ENCODE measurements at regions of chr20 and their contacts with region 1.

Region 1: GRCh38 chr20:44733341-44734069 is 12.2 kb upstream of the KCNK15 start:
- DNase-seq: peak; percentile 66 to 69
- ATAC-seq: peak; percentile 21 to 65 (median 50)
- H3K4me3 ChIP-seq: no peak overlapping the region
- H3K27ac ChIP-seq: no peak overlapping the region
- H3K4me1 ChIP-seq: peaks cover 3 to 35% (median 22%) of the 10 kb centered on the region in 9 donors
- H3K27me3 ChIP-seq: no peaks in the 10 kb centered on the region
- CTCF ChIP-seq: peak; percentile 85 to 96 (median 94)

Region 2: GRCh38 chr20:44210422-44211176 is 522.9 kb before region 1 on chr20 and contains the start of gene OSER1:
- intact Hi-C with region 1: loop called in 3 of 10 experiments (anchors 5 to 10 kb)
- DNase-seq: peak; percentile 97
- ATAC-seq: peak; percentile 93 to 97 (median 96)
- H3K4me3 ChIP-seq: peak within 1 kb of the TSS; percentile 73 to 99 (median 93)
- H3K27ac ChIP-seq: peak within 1 kb of the TSS; percentile 87 to 99 (median 94)
- H3K4me1 ChIP-seq: peaks cover 0 to 66% (median 50%) of the 10 kb centered on the region in 9 donors
- H3K27me3 ChIP-seq: no peaks in the 10 kb centered on the region
- CTCF ChIP-seq: no peak
- total RNA-seq, gene OSER1: 22.6 to 37.3 (median 31.3) TPM

Region 3: DNA sequence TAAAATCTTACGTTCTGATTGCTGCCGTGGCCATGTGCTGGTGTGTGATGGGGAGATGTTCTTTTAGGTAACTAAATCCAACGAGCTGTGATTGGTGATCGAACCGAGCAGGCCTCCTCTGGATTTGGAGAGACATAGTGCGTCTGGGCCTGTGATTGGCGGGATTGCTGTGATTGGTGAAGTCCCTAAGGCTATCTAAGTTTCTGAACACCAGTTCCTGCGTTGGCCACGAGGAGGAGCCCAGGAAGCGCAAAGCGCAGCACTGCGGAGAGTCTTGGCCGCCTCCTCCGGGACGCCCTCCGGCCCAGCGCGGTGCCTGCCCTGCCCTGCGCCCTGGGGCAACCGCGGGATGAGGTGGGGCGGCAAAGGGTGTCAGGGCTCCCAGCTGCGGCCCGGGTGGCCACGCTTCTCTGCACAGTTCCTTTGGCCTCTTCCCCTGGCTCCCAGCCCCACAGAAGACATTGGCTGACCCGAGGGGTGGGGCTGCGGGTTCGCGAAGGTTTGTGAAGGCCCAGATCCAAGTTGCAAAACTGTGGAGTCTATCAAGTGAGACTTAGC is 345.0 kb before region 1 on chr20:
- intact Hi-C with region 1: loop called in 4 of 10 experiments (anchors 5 to 10 kb)
- DNase-seq: peak; percentile 33 to 68
- ATAC-seq: peak in 7 of 8 donors; percentile 50 to 80 (median 70)
- H3K4me3 ChIP-seq: no peak overlapping the region
- H3K27ac ChIP-seq: no peak overlapping the region
- H3K4me1 ChIP-seq: peaks cover 0 to 6% (median 0%) of the 10 kb centered on the region in 9 donors
- H3K27me3 ChIP-seq: peaks cover 0 to 27% (median 18%) of the 10 kb centered on the region in 7 donors
- CTCF ChIP-seq: peak; percentile 35 to 80 (median 64)

Region 4: DNA sequence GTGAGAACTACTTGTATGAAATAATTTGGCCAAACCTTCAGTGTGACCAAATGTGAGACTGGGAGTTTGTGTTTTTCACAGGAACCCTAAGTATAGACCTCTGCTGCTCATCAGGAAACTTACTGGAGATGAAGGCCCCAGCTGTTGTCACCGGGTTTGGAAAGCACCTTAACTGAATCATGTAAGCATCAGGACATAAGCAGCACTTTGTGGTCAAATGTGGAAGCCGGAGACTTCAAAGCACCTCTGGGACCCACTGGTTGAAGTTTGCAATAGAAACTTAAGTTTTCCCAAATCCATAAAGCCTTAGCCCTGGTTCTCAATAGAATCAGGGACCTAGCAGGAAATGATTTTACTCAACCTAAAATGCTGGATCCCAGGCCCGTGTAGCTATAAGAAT is 243.6 kb before region 1 on chr20:
- intact Hi-C with region 1: loop called in 1 of 10 experiments (anchors 10 kb)
- DNase-seq: no peak
- ATAC-seq: no peak
- H3K4me3 ChIP-seq: no peak overlapping the region
- H3K27ac ChIP-seq: no peak overlapping the region
- H3K4me1 ChIP-seq: peaks cover 0 to 16% (median 6%) of the 10 kb centered on the region in 9 donors
- H3K27me3 ChIP-seq: no peaks in the 10 kb centered on the region
- CTCF ChIP-seq: no peak

Region 5: GRCh38 chr20:44683263-44684046 is 50.0 kb before region 1 on chr20:
- intact Hi-C with region 1: loop called (anchors 1 to 2 kb)
- DNase-seq: no peak
- ATAC-seq: peak in 7 of 8 donors; percentile 43 to 75 (median 54)
- H3K4me3 ChIP-seq: no peak overlapping the region
- H3K27ac ChIP-seq: no peak overlapping the region
- H3K4me1 ChIP-seq: peaks cover 0 to 14% (median 6%) of the 10 kb centered on the region in 9 donors
- H3K27me3 ChIP-seq: peaks cover 0 to 4% (median 0%) of the 10 kb centered on the region in 7 donors
- CTCF ChIP-seq: peak in 8 of 9 donors; percentile 46 to 75 (median 56)

Region 6: GRCh38 chr20:44761423-44761822 is 27.9 kb after region 1 on chr20:
- intact Hi-C with region 1: no loop called
- DNase-seq: no peak
- ATAC-seq: peak in 6 of 8 donors; percentile 26 to 83 (median 69)
- H3K4me3 ChIP-seq: no peak overlapping the region
- H3K27ac ChIP-seq: peak overlapping the region in 9 of 10 donors; percentile 34 to 94 (median 84)
- H3K4me1 ChIP-seq: peaks cover 3 to 26% (median 12%) of the 10 kb centered on the region in 9 donors
- H3K27me3 ChIP-seq: peaks cover 0 to 3% (median 0%) of the 10 kb centered on the region in 7 donors
- CTCF ChIP-seq: no peak

Measured in heart right ventricle (tissue), 16 donors.